Activated CD8-positive, alpha-beta memory T cell treated with anti-CD3 and anti-CD28 coated beads, Interleukin-2, amount 10 ng/mL, durations not matched to agents 7 days and 5 days (primary cell): ENCODE measurements at regions of chr12 and their contacts with region 1.

Region 1: DNA sequence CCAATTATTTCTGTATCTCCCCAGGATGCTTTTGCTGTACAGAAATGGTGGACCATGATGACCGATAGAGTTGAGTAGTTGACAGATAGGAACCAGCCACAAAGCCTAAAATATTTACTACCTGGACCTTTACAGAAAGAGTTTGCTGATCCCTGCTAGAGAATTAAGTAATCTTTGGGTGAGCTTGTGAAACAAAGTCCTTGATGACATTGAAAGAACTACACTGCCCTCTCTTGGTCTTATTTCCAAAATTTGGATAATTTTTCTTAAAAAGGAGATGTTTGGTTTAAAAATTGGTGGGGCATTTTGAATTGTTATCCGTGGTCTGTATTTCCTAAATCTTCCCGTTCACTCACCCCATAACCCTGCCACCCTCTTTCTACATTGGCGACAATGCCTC is 13.7 kb upstream of the TCTN1 start:
- DNase-seq: no peak
- ATAC-seq: no peak
- H3K4me3 Mint-ChIP-seq: no peak overlapping the region
- H3K27ac Mint-ChIP-seq: no peak overlapping the region
- H3K4me1 Mint-ChIP-seq: peaks cover 9% of the 10 kb centered on the region
- H3K27me3 Mint-ChIP-seq: no peaks in the 10 kb centered on the region

Region 2: DNA sequence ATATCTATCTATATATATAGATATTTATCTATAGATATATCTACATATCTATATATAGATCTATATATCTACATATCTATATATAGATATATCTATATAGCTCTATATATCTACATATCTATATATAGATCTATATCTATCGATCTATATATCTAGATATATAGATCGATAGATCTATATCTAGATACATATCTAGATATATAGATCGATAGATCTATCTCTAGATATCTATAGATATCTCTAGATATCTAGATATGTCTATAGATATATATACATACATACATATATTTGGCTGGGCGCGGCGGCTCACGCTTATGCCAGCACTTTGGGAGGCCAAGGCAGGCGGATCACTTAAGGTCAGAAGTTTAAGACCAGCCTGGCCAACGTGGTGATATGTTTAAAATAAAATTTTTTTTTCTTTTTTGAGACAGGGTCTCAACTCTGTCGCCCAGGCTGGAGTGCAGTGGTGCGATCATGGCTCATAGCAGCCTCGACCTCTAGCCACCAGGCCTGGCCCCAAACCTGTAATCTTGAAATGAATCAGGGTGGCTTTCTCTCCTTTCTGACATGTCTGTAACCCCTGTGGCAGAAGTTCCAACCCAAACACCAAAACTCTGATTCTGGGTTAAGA is 168.2 kb before region 1 on chr12:
- CTCF ChIA-PET with region 1: interaction called, 13 read pairs
- DNase-seq: peak; percentile 55
- ATAC-seq: no peak
- H3K4me3 Mint-ChIP-seq: no peak overlapping the region
- H3K27ac Mint-ChIP-seq: no peak overlapping the region
- H3K4me1 Mint-ChIP-seq: peaks cover 10% of the 10 kb centered on the region
- H3K27me3 Mint-ChIP-seq: no peaks in the 10 kb centered on the region

Region 3: GRCh38 chr12:110468212-110469048 is 131.8 kb before region 1 on chr12 and contains the starts of genes FAM216A and GPN3:
- CTCF ChIA-PET with region 1: interaction called, 33 read pairs
- DNase-seq: peak; percentile 98
- ATAC-seq: peak; percentile 88
- H3K4me3 Mint-ChIP-seq: peak within 1 kb of the TSS; percentile 92
- H3K27ac Mint-ChIP-seq: peak within 1 kb of the TSS; percentile 98
- H3K4me1 Mint-ChIP-seq: peaks cover 43% of the 10 kb centered on the region
- H3K27me3 Mint-ChIP-seq: no peaks in the 10 kb centered on the region
- total RNA-seq, gene FAM216A: 23.1 to 24.8 TPM
- total RNA-seq, gene GPN3: 25.8 to 34.6 TPM

Region 4: DNA sequence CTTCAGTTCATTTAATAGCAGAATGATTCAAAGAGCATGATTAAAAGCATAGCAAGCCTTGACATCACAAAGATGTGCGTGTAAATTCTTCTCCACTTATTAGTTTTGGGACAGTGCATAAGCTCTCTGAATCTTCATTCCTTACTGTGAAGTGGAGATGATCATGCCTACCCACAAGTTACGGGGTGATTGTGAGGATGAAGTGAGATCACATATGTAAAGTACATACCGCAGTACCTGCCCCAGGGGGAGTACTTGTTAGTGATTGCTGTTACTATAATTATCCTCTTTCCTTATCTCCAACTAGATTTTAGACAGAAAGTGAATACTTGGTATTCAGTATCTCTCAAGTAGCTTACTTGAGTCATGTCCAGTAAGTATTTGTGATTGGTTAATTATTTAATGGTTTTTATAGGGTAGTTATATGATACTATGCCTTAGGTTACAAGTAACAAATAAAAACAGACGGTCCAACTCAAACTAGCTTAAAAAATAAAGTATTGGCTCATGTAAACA is 92.1 kb before region 1 on chr12:
- CTCF ChIA-PET with region 1: interaction called, 141 read pairs
- DNase-seq: no peak
- ATAC-seq: no peak
- H3K4me3 Mint-ChIP-seq: no peak overlapping the region
- H3K27ac Mint-ChIP-seq: no peak overlapping the region
- H3K4me1 Mint-ChIP-seq: peaks cover 2% of the 10 kb centered on the region
- H3K27me3 Mint-ChIP-seq: no peaks in the 10 kb centered on the region

Region 5: GRCh38 chr12:110543252-110543959 is 56.8 kb before region 1 on chr12:
- CTCF ChIA-PET with region 1: interaction called, 157 read pairs
- DNase-seq: no peak
- ATAC-seq: no peak
- H3K4me3 Mint-ChIP-seq: no peak overlapping the region
- H3K27ac Mint-ChIP-seq: peak overlapping the region; percentile 41
- H3K4me1 Mint-ChIP-seq: peaks cover 35% of the 10 kb centered on the region
- H3K27me3 Mint-ChIP-seq: no peaks in the 10 kb centered on the region

Region 6: DNA sequence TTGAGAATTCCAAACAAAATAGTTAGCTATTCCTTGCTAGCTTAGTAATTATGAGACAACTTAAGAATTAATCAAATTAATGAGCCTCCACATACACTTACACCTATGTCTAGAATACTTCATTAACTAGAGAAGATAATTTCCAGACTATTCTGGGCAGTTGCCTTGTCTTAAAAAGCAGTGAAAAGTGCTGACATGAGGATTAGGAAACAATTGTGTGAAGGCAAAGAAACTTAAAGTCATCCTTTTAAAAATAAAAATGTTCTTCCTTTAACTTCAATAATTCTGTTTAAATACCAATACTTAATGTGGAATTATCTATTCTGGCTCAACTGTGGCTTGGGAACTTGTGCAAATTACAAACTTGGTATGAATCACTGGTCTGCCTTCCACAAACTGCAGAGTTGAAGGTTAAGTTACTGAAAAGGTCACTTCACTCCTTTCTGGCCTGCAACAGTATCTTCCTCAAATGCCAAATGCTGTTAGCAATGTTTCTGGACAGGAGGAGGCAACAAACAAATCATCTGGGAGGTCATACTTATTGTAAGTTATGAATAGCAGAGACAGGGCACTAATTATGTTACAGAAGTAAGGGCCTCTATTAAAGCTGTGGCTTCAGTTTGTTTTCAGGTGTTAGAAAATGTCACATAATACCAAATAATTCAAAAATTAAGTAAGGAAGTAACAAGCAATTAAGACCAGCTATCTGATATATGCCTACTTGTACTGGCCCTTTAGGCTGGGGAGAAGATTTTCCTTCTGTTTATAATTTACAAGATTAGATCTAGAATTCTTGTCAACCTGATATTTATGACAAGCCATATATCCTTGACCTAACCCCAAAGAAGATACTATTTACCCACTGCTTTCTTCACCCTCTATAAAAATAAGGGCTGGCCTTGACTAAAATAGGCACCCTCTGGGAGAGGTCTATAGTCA is 36.3 kb before region 1 on chr12:
- CTCF ChIA-PET with region 1: interaction called, 48 read pairs
- DNase-seq: no peak
- ATAC-seq: no peak
- H3K4me3 Mint-ChIP-seq: no peak overlapping the region
- H3K27ac Mint-ChIP-seq: peak overlapping the region; percentile 40
- H3K4me1 Mint-ChIP-seq: peaks cover 41% of the 10 kb centered on the region
- H3K27me3 Mint-ChIP-seq: no peaks in the 10 kb centered on the region

Region 7: DNA sequence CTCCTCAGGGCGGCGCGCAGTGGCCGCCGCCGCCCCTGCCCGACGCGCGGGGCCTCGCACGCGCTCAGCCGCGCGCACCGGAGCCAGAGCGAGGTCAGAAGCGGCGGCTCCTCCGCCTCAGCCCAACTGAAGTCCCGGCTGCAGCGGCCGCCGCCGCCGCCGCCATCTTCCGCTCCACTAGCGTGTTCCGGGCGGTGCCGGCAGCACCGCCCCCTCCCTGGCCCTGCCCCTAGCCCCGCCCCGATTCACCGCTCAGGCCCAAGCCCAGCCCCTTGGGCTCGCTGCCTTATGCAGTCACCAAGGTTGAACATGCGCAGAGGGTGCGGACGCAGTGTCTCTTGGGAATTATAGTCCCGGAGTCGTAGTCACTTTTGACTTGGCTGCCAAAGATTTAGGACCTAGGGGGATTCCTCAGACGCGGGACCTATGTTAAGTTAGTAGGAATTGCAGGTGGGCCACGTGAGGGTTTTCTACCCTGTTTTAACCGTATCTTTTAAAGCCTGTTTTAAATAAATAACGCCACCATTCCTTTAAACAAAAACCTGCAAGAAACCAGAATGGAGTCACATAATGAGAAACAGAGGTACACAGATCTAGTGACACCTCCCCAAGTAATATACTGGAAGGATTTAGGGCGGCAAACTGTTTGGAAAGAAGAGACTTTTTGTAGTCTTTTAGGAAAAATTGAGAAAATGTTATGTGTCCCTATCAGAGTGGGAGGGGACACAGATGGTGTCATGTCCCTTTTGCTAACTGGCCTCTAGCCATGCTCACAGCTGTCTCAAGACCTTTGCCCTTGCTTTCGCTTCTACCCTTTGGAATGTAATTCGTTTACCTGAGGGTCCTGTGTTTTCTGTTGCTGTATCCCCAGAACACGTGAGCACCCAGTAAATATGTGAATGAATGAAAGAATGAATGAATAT is 16.9 kb before region 1 on chr12 and contains the start of gene PPTC7:
- CTCF ChIA-PET with region 1: interaction called, 26 read pairs
- DNase-seq: peak; percentile 98
- ATAC-seq: peak; percentile 95
- H3K4me3 Mint-ChIP-seq: peak within 1 kb of the TSS; percentile 92
- H3K27ac Mint-ChIP-seq: peak within 1 kb of the TSS; percentile 89
- H3K4me1 Mint-ChIP-seq: peaks cover 59% of the 10 kb centered on the region
- H3K27me3 Mint-ChIP-seq: no peaks in the 10 kb centered on the region
- total RNA-seq, gene PPTC7: 23.2 to 32.9 TPM

Region 8: DNA sequence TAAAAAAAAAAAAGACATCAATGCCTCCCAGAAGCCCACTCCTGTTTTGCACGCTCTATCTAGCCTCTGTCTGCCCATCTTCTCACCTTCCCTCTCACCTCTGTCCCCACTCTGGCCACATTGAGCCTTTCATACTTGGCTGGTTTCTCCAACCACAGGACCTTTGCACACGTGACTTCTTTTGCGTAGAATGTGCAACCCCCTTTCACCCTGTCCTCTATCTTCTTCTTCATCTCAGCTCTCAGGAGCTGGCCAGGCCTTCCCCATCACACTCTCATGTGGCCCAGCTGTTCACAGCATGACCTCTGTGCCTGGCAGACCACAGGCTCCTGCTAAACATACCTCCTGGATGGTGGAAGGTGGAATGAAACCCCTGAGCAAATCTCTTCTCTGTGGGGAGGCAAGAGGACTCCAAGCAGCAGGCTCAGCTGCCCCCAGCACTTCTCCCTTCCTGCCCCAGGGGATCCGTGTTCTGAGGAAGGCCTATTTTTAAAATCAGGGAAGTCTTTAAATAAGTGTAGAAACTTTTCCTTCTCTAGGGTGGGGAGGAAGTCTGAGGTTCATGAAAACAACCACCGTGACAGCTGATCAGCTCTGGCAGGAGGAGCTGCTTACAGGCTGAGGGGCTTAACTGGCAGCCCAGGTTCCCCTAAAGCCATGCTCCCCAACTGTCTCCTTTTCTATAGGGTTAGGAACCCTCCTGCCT is 77.1 kb after region 1 on chr12:
- CTCF ChIA-PET with region 1: no interaction called
- DNase-seq: peak; percentile 47
- ATAC-seq: peak; percentile 68
- H3K4me3 Mint-ChIP-seq: peak overlapping the region; percentile 1
- H3K27ac Mint-ChIP-seq: peak overlapping the region; percentile 78
- H3K4me1 Mint-ChIP-seq: peaks cover 49% of the 10 kb centered on the region
- H3K27me3 Mint-ChIP-seq: no peaks in the 10 kb centered on the region

Region 9: GRCh38 chr12:110708917-110709316 is 108.7 kb after region 1 on chr12:
- CTCF ChIA-PET with region 1: no interaction called
- DNase-seq: no peak
- ATAC-seq: no peak
- H3K4me3 Mint-ChIP-seq: no peak overlapping the region
- H3K27ac Mint-ChIP-seq: no peak overlapping the region
- H3K4me1 Mint-ChIP-seq: no peaks in the 10 kb centered on the region
- H3K27me3 Mint-ChIP-seq: no peaks in the 10 kb centered on the region

Region 10: GRCh38 chr12:111086947-111087700 is 486.9 kb after region 1 on chr12:
- CTCF ChIA-PET with region 1: no interaction called
- DNase-seq: no peak
- ATAC-seq: no peak
- H3K4me3 Mint-ChIP-seq: no peak overlapping the region
- H3K27ac Mint-ChIP-seq: no peak overlapping the region
- H3K4me1 Mint-ChIP-seq: no peaks in the 10 kb centered on the region
- H3K27me3 Mint-ChIP-seq: peaks cover 31% of the 10 kb centered on the region